ENCODE measurements at regions of chr11 and their contacts with region 1.

Region 1: GRCh38 chr11:47152953-47153950 is 23.4 kb downstream of the ARFGAP2 start:
- DNase-seq: peak; percentile 72
- H3K4me3 Mint-ChIP-seq: no peak overlapping the region
- H3K27ac Mint-ChIP-seq: no peak overlapping the region
- H3K4me1 Mint-ChIP-seq: peaks cover 29% of the 10 kb centered on the region
- H3K27me3 Mint-ChIP-seq: no peaks in the 10 kb centered on the region

Region 2: GRCh38 chr11:46889689-46890475 is 263.4 kb before region 1 on chr11:
- CTCF ChIA-PET with region 1: interaction called, 38 read pairs
- intact Hi-C with region 1: loop called (anchors 1 kb)
- DNase-seq: peak; percentile 90
- H3K4me3 Mint-ChIP-seq: no peak overlapping the region
- H3K27ac Mint-ChIP-seq: no peak overlapping the region
- H3K4me1 Mint-ChIP-seq: peaks cover 2% of the 10 kb centered on the region
- H3K27me3 Mint-ChIP-seq: no peaks in the 10 kb centered on the region

Region 3: DNA sequence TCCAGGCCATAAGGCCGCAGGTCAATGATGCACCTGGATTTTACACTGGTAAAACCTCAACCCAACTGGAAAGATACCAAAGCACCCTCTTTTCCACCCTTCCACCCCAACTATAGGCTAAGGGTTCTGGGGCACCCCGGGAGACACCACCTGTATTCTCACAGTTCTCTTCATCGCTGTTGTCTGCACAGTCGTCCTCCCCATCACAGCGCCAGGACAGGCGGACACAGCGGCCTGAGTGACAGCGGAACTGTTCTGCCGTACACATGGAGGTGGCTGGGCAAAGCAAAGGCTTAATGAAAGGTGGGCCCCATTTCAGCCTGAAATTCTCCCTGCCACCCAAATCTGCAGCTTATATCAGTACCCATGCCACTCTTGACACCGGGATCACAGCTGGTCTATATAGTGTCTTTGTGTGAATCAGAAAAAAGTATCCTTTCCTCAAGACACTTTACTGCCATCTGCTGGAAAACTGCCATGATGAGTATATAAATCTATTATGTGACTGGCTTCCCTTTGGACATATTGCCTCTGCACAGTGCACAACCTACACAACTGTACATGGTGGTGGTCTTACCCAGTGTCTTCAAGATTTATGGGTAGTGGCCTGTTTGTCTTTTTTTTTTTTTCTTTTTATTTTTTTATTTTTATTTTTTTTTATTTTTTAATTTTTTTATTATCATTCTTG is 256.4 kb before region 1 on chr11:
- CTCF ChIA-PET with region 1: interaction called, 38 read pairs
- intact Hi-C with region 1: no loop called
- DNase-seq: peak; percentile 19
- H3K4me3 Mint-ChIP-seq: no peak overlapping the region
- H3K27ac Mint-ChIP-seq: no peak overlapping the region
- H3K4me1 Mint-ChIP-seq: no peaks in the 10 kb centered on the region
- H3K27me3 Mint-ChIP-seq: no peaks in the 10 kb centered on the region

Region 4: DNA sequence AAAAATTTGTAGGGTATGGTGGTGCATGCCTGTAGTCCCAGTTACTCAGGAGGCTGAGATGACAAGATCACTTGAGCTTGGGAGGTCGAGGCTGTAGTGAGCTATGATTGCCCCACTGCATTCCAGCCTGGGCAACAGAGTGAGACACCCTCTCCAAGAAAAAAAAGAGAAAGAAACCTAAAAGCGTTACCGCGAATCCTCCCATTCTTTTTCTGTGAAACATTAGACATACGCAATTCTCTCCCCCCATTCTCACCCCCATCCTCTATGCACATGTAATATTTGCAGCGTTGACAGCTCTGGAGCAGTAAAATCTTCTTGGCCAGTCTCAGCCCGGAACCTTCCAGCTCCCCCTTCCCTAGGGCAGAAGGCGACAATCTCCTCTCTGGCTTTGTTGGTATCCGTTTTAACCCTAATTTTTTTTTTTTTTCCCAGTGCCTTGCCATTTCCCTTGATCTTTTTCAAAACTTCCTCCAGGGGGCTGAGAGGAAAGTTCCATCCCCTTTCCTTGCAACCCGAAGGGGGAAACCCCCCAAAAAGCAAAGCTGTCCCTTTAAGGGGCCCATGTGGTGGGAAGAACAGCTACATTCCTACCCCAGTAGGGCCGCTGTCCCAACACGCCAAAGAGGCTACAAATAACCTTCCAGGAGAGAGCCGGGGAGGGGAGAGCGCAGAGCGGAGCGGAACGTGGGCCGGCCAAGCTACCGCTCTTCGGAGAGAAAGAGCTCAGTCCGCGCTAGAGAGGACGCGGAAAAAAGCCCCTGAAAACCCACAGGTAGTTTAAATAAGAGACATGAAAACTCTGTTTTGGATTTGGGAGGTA is 236.8 kb before region 1 on chr11:
- CTCF ChIA-PET with region 1: interaction called, 16 read pairs
- intact Hi-C with region 1: loop called (anchors 1 kb)
- DNase-seq: peak; percentile 27
- H3K4me3 Mint-ChIP-seq: peak overlapping the region; percentile 66
- H3K27ac Mint-ChIP-seq: no peak overlapping the region
- H3K4me1 Mint-ChIP-seq: peaks cover 25% of the 10 kb centered on the region
- H3K27me3 Mint-ChIP-seq: peaks cover 62% of the 10 kb centered on the region

Region 5: GRCh38 chr11:47051217-47051616 is 102.0 kb before region 1 on chr11:
- CTCF ChIA-PET with region 1: no interaction called
- intact Hi-C with region 1: no loop called
- DNase-seq: no peak
- H3K4me3 Mint-ChIP-seq: no peak overlapping the region
- H3K27ac Mint-ChIP-seq: no peak overlapping the region
- H3K4me1 Mint-ChIP-seq: no peaks in the 10 kb centered on the region
- H3K27me3 Mint-ChIP-seq: no peaks in the 10 kb centered on the region

Region 6: GRCh38 chr11:47130543-47130942 is 22.7 kb before region 1 on chr11:
- CTCF ChIA-PET with region 1: interaction called, 10 read pairs
- intact Hi-C with region 1: no loop called
- DNase-seq: no peak
- H3K4me3 Mint-ChIP-seq: no peak overlapping the region
- H3K27ac Mint-ChIP-seq: no peak overlapping the region
- H3K4me1 Mint-ChIP-seq: no peaks in the 10 kb centered on the region
- H3K27me3 Mint-ChIP-seq: no peaks in the 10 kb centered on the region

Region 7: GRCh38 chr11:47617417-47617809 is 464.2 kb after region 1 on chr11:
- CTCF ChIA-PET with region 1: no interaction called
- intact Hi-C with region 1: no loop called
- DNase-seq: no peak
- H3K4me3 Mint-ChIP-seq: no peak overlapping the region
- H3K27ac Mint-ChIP-seq: no peak overlapping the region
- H3K4me1 Mint-ChIP-seq: no peaks in the 10 kb centered on the region
- H3K27me3 Mint-ChIP-seq: no peaks in the 10 kb centered on the region

Region 8: GRCh38 chr11:48063424-48063978 is 910.2 kb after region 1 on chr11:
- CTCF ChIA-PET with region 1: no interaction called
- intact Hi-C with region 1: no loop called
- DNase-seq: no peak
- H3K4me3 Mint-ChIP-seq: no peak overlapping the region
- H3K27ac Mint-ChIP-seq: no peak overlapping the region
- H3K4me1 Mint-ChIP-seq: peaks cover 55% of the 10 kb centered on the region
- H3K27me3 Mint-ChIP-seq: no peaks in the 10 kb centered on the region

Measured in activated naive CD4-positive, alpha-beta T cell treated with anti-CD3 and anti-CD28 coated beads for 36 hours (primary cell).